HCT116 (cell line): ENCODE measurements at regions of chr3 and their contacts with region 1.

Region 1: GRCh38 chr3:16319307-16319706 is 54.3 kb downstream of the OXNAD1 start:
- DNase-seq: peak; percentile 13
- ATAC-seq: peak; percentile 89
- H3K4me3 ChIP-seq: no peak overlapping the region
- H3K27ac ChIP-seq: no peak overlapping the region
- H3K4me1 ChIP-seq: no peaks in the 10 kb centered on the region
- H3K27me3 ChIP-seq: no peaks in the 10 kb centered on the region
- CTCF ChIP-seq: peak; percentile 31 to 72 (median 65); a peak in 5 of 6 replicates
- POLR2A ChIP-seq: no peak
- RAD21 ChIP-seq: peak; percentile 40

Region 2: DNA sequence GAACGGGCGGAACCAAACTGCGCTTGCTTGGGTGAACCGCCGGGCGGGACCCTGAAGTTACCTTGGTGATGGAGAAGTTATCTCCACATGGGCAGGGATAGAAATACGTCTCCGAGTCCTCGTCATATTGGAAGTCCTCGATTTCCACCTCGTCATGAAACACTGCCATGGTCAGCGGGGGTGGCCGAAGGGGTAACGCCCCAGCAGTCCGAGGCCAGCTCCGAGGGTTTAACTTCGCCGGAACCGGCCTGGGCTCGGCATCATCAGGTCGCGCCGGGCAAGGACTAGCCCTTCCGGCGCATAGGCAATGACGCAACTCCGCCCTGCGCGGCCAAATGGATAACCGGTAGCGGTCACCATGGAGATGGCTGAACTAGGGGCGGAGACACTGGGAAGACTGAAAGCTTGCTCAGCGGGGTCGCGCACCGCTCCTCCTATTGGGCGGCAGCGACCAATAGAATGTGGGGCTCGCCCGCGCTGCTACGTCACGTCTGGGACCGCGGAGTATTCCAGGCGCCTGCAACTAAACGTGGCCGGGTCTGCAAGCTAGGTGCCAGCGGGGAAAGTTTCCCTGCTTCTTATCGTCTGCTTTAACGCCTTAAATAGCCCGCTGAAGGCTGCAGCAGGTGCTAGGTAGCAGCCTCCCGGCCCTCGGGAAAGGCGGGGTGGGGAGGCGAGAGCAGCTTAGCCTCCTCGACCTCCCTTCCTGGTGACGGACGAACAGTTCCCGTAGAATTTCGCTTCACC is 54.4 kb before region 1 on chr3 and contains the starts of genes DPH3 and OXNAD1:
- CTCF ChIA-PET with region 1: no interaction called
- POLR2A ChIA-PET with region 1: no interaction called
- RAD21 ChIA-PET with region 1: no interaction called
- intact Hi-C with region 1: loop called (anchors 1 kb)
- DNase-seq: peak; percentile 99
- ATAC-seq: peak; percentile 98
- H3K4me3 ChIP-seq: peak within 1 kb of the TSS; percentile 93 to 95
- H3K27ac ChIP-seq: peak within 1 kb of the TSS; percentile 52
- H3K4me1 ChIP-seq: peaks cover 6 to 8% of the 10 kb centered on the region in 2 experiments; a peak in 3 of 4 replicates
- H3K27me3 ChIP-seq: no peaks in the 10 kb centered on the region
- CTCF ChIP-seq: no peak
- POLR2A ChIP-seq: peak; percentile 82
- RAD21 ChIP-seq: no peak
- total RNA-seq, gene DPH3: 13.8 TPM
- total RNA-seq, gene OXNAD1: 12.1 TPM